Right cardiac atrium (tissue), 5 donors: ENCODE measurements at regions of chr10 and their contacts with region 1.

Region 1: DNA sequence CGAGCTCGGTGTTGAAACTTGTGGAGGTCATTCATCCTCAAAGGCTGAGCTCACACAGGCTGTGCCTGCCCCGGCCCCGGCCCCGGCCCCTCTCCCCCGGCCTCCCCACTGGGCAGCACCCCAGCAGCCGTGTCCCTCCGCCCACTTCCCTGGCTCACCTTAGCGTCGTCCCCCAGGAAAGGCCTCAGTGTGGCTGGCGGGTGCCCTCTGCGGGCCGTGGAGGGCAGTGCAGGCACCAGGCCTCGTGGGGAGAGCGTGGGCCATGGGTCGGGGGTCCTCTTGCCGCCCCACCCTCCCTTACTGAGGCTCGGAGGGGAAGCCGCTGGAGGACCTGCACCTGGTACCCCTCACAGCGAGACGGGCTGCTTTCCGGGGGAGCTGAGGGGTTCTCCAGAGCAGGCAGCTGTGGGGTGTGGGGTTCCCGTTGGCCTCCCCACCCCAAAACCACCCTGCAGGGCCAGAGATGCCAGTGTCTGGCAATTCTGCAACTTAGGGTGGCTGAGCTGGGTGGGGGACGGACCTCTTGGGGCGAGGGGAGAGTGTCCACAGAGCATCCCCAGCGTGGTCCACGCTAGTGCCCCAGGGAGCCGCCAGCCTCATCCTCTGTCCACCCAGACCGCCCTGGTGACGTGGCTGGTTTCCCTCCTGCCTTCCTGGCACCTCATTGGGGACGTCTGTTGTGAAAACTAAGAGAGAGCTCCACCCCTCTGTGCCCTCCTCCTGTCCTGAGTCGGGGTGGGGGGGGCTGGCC is 44.2 kb upstream of the DPYSL4 start:
- DNase-seq: peak; percentile 42 to 80 (median 79)
- ATAC-seq: peak; percentile 58 to 71
- H3K4me3 ChIP-seq: no peak overlapping the region
- H3K27ac ChIP-seq: no peak overlapping the region
- H3K4me1 ChIP-seq: no peaks in the 10 kb centered on the region
- H3K27me3 ChIP-seq: no peaks in the 10 kb centered on the region

Region 2: GRCh38 chr10:131635564-131636015 is 507.0 kb before region 1 on chr10:
- intact Hi-C with region 1: no loop called
- DNase-seq: no peak
- ATAC-seq: no peak
- H3K4me3 ChIP-seq: no peak overlapping the region
- H3K27ac ChIP-seq: no peak overlapping the region
- H3K4me1 ChIP-seq: no peaks in the 10 kb centered on the region
- H3K27me3 ChIP-seq: no peaks in the 10 kb centered on the region

Region 3: GRCh38 chr10:131694781-131695495 is 447.6 kb before region 1 on chr10:
- intact Hi-C with region 1: no loop called
- DNase-seq: no peak
- ATAC-seq: no peak
- H3K4me3 ChIP-seq: no peak overlapping the region
- H3K27ac ChIP-seq: no peak overlapping the region
- H3K4me1 ChIP-seq: no peaks in the 10 kb centered on the region
- H3K27me3 ChIP-seq: no peaks in the 10 kb centered on the region

Region 4: DNA sequence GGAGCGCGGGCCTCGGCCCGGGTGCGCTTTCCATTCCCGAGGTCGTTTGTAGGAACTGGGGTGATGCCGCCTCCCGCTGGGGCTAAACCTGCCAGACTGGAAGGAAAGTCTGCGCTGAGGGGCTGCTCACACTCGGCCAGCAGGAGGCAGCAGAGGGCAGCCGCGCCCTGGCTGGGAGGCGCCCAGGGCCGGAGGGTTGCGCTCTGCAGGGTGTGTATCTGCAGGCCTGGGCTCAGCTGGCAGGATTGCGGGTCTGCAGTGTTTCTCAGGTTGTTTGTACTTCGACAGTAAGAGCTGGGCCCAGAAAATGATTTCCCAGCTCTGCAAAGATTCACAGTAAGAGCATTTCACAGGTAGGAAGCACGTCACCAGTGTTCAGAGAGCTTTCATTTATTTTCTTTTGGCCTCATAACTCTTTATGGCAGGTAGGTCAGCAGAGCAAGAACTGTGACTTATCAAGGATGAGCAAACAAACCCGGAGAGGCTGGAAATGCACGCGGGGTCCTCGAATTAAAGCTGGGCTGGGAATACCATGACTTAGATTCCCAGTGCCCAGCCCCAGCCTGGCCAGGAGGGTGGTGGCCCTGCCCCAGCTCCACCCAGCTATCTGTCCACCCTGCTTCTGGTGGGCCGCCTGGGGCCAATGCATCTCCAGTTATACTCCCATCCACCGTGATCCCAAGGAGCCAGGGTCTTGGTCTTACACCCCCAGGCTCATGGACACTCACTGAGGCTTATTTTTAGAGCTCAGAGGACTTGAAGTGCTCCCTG is 257.0 kb before region 1 on chr10:
- intact Hi-C with region 1: loop called in 2 of 4 experiments (anchors 5 kb)
- DNase-seq: peak; percentile 70 to 91 (median 90)
- ATAC-seq: peak; percentile 94 to 97
- H3K4me3 ChIP-seq: no peak overlapping the region
- H3K27ac ChIP-seq: no peak overlapping the region
- H3K4me1 ChIP-seq: no peaks in the 10 kb centered on the region
- H3K27me3 ChIP-seq: no peaks in the 10 kb centered on the region

Region 5: GRCh38 chr10:132036153-132036886 is 106.3 kb before region 1 on chr10:
- intact Hi-C with region 1: loop called in 1 of 4 experiments (anchors 10 kb)
- DNase-seq: peak in 2 of 3 donors; percentile 33 to 58
- ATAC-seq: peak; percentile 50 to 55
- H3K4me3 ChIP-seq: peak overlapping the region; percentile 37
- H3K27ac ChIP-seq: no peak overlapping the region
- H3K4me1 ChIP-seq: no peaks in the 10 kb centered on the region
- H3K27me3 ChIP-seq: no peaks in the 10 kb centered on the region

Region 6: DNA sequence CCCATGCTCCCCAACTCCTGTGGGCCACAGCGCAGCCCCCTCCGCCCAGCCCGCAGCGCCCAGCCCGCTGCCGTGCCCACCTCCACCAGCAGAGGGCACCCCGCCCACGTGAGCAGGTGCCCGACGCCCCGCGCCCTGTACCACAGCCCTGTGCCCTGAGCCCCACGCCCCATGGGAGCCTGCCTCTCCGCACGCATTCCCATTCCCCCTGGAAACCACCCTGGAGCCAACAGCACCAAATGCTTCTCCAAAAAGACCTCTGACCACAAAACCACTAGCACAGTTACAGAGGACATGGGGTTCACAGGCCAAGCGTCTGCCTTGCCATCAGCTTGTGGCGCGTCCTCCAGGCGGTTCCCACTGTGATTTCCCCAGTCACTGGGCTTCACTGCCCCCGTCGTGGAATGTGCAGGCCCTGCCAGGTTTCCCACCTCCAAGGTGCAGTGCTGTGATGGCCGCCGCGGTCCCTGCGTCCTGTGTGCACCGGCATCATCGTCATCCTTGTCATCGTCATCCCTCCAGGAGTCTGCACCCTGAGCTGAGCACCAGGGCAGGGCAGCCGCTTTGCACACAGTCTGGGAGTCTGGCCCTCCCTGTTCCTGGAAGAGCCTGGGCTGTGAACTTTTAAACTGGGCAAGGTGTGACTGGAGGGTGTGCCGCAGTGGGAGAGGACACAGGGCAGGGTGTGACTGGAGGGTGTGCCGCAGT is 316.2 kb after region 1 on chr10:
- intact Hi-C with region 1: no loop called
- DNase-seq: peak; percentile 50 to 87 (median 86)
- ATAC-seq: peak; percentile 46 to 66
- H3K4me3 ChIP-seq: no peak overlapping the region
- H3K27ac ChIP-seq: no peak overlapping the region
- H3K4me1 ChIP-seq: peaks cover 4% of the 10 kb centered on the region
- H3K27me3 ChIP-seq: no peaks in the 10 kb centered on the region